ENCODE measurements at regions of chr6 and their contacts with region 1.

Region 1: DNA sequence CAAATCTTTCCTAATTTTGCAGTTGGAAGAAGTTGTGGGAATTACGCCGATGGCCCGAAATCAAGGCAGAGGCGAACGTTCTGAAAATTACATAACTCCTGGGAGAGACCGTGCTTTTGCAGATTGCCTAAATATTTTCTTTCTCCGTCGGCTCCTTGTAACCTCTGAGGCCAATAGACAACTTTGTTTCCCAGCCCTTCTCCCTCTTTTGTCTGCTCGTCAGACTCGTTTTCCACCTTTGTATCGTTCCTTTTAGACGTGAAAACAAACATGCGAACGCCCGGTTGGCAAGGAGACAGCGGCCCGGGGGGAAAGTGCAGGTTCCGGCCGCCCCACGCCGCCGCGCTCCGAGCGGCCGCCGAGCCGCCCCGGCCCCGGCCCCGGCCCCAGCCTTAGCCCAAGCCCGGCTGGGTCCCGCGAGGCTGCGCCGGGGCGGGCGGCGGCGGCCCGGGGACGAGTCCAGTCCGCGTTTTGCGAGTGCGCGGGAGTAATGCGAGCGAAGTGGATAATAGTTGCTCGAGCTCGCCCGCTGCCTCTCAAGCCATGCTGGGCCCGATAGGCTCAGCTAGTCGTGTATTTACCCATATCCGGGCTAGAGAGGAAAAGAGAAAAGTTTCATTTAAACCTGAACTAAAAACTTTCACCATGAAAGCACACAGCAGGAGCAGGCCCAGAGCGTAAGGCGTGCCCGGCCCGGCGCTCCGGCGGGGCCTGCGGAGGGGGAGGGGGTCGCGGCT is at the start of gene ARID1B:
- DNase-seq: peak; percentile 60
- ATAC-seq: peak; percentile 36
- H3K4me3 ChIP-seq: peak within 1 kb of the TSS; percentile 93
- H3K27ac ChIP-seq: peak within 1 kb of the TSS; percentile 91
- H3K4me1 ChIP-seq: peaks cover 22% of the 10 kb centered on the region
- H3K27me3 ChIP-seq: no peaks in the 10 kb centered on the region
- CTCF ChIP-seq: no peak
- total RNA-seq, gene ARID1B: 24.1 and 24.2 TPM in 2 replicates

Region 2: GRCh38 chr6:156564127-156564806 is 212.7 kb before region 1 on chr6:
- CTCF ChIA-PET with region 1: no interaction called
- POLR2A ChIA-PET with region 1: no interaction called
- intact Hi-C with region 1: loop called (anchors 5 kb)
- DNase-seq: peak; percentile 66
- ATAC-seq: peak; percentile 93
- H3K4me3 ChIP-seq: no peak overlapping the region
- H3K27ac ChIP-seq: no peak overlapping the region
- H3K4me1 ChIP-seq: no peaks in the 10 kb centered on the region
- H3K27me3 ChIP-seq: no peaks in the 10 kb centered on the region
- CTCF ChIP-seq: peak; percentile 82

Region 3: GRCh38 chr6:156686995-156687788 is 89.8 kb before region 1 on chr6:
- CTCF ChIA-PET with region 1: no interaction called
- POLR2A ChIA-PET with region 1: interaction called, 4 read pairs
- intact Hi-C with region 1: loop called (anchors 1 kb)
- DNase-seq: peak; percentile 73
- ATAC-seq: peak; percentile 87
- H3K4me3 ChIP-seq: peak overlapping the region; percentile 91
- H3K27ac ChIP-seq: peak overlapping the region; percentile 90
- H3K4me1 ChIP-seq: peaks cover 16% of the 10 kb centered on the region
- H3K27me3 ChIP-seq: no peaks in the 10 kb centered on the region
- CTCF ChIP-seq: no peak

Region 4: DNA sequence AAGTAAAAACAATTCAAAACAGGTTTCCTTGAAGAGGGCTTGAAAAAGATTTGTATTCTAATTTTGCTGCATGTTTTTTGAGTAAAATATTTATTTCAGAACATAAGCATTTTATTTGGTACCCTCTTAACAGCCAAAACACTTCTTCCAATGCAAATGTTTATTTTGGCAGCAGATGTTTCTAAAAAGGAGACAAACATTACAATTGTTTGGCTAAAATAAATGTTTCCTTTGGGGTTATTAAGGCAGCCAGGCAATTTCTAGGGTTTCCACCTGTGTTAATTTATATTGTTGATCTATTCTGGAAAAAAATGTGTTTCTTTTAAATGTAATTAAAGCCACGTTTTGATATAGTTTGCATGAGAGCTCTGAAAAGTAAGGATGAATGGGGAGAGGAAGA is 56.7 kb after region 1 on chr6:
- CTCF ChIA-PET with region 1: no interaction called
- POLR2A ChIA-PET with region 1: no interaction called
- intact Hi-C with region 1: no loop called
- DNase-seq: no peak
- ATAC-seq: no peak
- H3K4me3 ChIP-seq: no peak overlapping the region
- H3K27ac ChIP-seq: no peak overlapping the region
- H3K4me1 ChIP-seq: peaks cover 4% of the 10 kb centered on the region
- H3K27me3 ChIP-seq: no peaks in the 10 kb centered on the region
- CTCF ChIP-seq: no peak

Region 5: DNA sequence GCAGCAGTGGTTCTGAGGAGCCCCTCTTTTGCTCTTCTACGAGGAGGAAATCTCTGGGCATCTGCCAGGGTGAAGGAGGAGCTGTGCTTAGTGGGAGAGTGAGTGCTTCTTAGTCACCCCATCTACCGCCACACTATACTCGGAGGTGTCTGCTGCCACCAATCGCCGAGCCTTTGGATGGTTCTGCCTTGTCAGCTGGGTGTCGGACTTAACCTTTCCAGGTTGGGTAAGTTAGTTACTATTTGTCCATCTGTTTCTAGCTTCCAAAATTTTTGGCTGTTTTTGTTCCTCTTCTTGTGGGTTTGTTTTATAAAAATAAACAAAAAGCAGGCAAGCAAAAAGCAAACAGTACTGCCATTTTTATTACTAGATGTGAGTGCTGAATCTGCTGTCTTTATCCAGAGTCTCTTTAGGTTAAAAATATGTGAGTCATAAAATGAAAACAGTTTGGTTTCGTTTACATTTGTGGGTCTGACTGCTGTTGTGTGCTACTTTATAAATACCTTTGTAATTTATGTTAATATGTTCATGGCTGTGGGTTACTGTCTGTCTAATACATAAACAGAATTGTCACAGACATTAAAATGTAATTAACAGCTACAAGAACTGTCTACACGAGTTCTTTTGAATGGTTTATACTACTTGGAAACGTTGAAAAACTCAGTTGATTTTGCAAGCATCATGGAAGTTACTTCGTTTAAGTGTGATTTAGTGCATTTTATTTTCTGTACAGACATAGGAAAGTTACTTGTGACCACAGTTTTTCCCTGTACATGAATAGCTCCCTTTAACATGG is 89.4 kb after region 1 on chr6:
- CTCF ChIA-PET with region 1: interaction called, 4 read pairs
- POLR2A ChIA-PET with region 1: no interaction called
- intact Hi-C with region 1: loop called (anchors 5 kb)
- DNase-seq: peak; percentile 61
- ATAC-seq: peak; percentile 90
- H3K4me3 ChIP-seq: peak overlapping the region; percentile 53
- H3K27ac ChIP-seq: peak overlapping the region; percentile 58
- H3K4me1 ChIP-seq: peaks cover 20% of the 10 kb centered on the region
- H3K27me3 ChIP-seq: no peaks in the 10 kb centered on the region
- CTCF ChIP-seq: peak; percentile 40

Region 6: GRCh38 chr6:156953479-156954146 is 176.6 kb after region 1 on chr6:
- CTCF ChIA-PET with region 1: no interaction called
- POLR2A ChIA-PET with region 1: interaction called, 4 read pairs
- intact Hi-C with region 1: loop called (anchors 1 kb)
- DNase-seq: peak; percentile 89
- ATAC-seq: peak; percentile 61
- H3K4me3 ChIP-seq: peak overlapping the region; percentile 34; the same call in 1 of the 2 replicates
- H3K27ac ChIP-seq: peak overlapping the region; percentile 61
- H3K4me1 ChIP-seq: peaks cover 68% of the 10 kb centered on the region
- H3K27me3 ChIP-seq: no peaks in the 10 kb centered on the region
- CTCF ChIP-seq: peak; percentile 41; the same call in 1 of the 2 replicates

Region 7: GRCh38 chr6:157034436-157035230 is 257.6 kb after region 1 on chr6:
- CTCF ChIA-PET with region 1: no interaction called
- POLR2A ChIA-PET with region 1: no interaction called
- intact Hi-C with region 1: loop called (anchors 5 kb)
- DNase-seq: peak; percentile 53
- ATAC-seq: peak; percentile 61
- H3K4me3 ChIP-seq: peak overlapping the region; percentile 71
- H3K27ac ChIP-seq: no peak overlapping the region
- H3K4me1 ChIP-seq: peaks cover 23% of the 10 kb centered on the region
- H3K27me3 ChIP-seq: no peaks in the 10 kb centered on the region
- CTCF ChIP-seq: peak; percentile 67

Region 8: GRCh38 chr6:157184202-157185020 is 407.4 kb after region 1 on chr6:
- CTCF ChIA-PET with region 1: no interaction called
- POLR2A ChIA-PET with region 1: no interaction called
- intact Hi-C with region 1: loop called (anchors 5 kb)
- DNase-seq: peak; percentile 71
- ATAC-seq: peak; percentile 49
- H3K4me3 ChIP-seq: no peak overlapping the region
- H3K27ac ChIP-seq: peak overlapping the region; percentile 25
- H3K4me1 ChIP-seq: peaks cover 37% of the 10 kb centered on the region
- H3K27me3 ChIP-seq: no peaks in the 10 kb centered on the region
- CTCF ChIP-seq: peak; percentile 90